ENCODE measurements at regions of chr12 and their contacts with region 1.

Region 1: GRCh38 chr12:77995436-77996167 is 164.9 kb downstream of the NAV3 start:
- DNase-seq: no peak
- ATAC-seq: no peak
- H3K4me3 ChIP-seq: no peak overlapping the region
- H3K27ac ChIP-seq: no peak overlapping the region
- H3K4me1 ChIP-seq: no peaks in the 10 kb centered on the region
- H3K27me3 ChIP-seq: no peaks in the 10 kb centered on the region
- CTCF ChIP-seq: no peak
- EP300 ChIP-seq: no peak
- POLR2A ChIP-seq: no peak
- RAD21 ChIP-seq: no peak

Region 2: DNA sequence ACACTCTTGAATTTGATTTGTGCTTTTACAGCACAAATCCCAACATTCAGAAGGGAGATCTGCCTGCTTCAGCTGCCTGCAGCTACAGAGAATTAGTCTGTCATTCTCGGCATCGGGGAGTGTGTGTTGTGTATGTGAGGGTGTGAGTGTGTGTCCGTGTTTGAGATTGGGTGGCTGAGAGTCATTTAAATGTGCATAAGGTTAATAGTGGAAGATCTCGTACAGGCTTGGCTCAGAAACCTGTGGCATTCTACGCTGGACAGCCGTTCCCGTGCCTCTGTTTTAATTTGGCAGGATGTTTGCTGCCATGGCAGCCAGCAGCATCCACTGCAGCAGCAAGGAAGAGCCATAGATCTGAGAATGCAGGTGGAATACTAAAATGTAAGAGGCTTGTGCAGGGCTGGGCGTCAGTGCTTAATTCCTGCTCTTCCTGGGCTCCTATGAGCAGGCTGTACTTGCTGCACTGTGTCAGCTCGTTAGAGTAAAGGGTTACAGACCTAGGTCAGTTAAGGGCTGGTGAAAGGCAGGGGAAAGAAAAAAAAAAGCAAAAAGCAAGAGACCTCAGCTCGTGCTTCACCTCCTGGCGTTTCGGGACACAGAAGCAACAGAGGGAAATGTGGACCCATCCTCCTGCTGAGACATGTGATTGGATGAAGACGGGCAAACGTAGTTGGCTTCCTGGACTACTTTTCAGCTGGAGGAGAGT is 40.5 kb after region 1 on chr12:
- CTCF ChIA-PET with region 1: no interaction called
- POLR2A ChIA-PET with region 1: no interaction called
- in situ Hi-C with region 1: no loop called
- intact Hi-C with region 1: no loop called
- DNase-seq: no peak
- ATAC-seq: no peak
- H3K4me3 ChIP-seq: no peak overlapping the region
- H3K27ac ChIP-seq: no peak overlapping the region
- H3K4me1 ChIP-seq: no peaks in the 10 kb centered on the region
- H3K27me3 ChIP-seq: no peaks in the 10 kb centered on the region
- CTCF ChIP-seq: no peak
- EP300 ChIP-seq: no peak
- POLR2A ChIP-seq: no peak
- RAD21 ChIP-seq: no peak

Region 3: DNA sequence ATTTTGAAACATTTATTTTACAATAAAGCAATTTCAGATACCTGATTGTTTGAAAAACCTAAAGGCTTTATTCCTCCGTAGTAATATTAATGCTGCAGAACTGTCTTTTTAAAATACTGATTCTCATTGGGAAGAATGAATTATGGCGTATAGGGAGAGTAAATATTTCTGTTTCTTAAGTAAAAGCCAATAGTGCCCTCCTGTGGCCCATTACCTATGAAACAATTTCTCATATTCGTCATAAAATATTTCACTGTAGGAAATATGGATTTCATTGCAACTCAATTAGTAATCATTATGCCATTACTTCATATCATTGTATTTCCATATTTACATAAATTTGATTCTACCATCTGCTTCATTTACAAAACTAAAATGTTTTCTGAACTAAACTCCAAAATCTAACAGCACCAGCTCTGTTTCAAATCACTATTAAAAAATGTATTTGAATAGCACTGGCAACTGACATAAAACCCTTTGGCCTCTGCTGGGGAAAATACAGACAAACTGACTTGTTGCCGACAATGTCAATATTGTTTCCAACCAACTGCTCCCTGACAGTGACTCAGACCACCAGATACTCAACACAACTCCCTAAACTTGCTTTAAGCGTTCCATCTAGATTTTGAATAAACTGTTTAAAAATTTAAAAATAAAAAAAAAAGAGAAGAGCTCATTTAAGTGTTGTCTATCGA is 125.4 kb after region 1 on chr12:
- CTCF ChIA-PET with region 1: interaction called, 5 read pairs
- POLR2A ChIA-PET with region 1: no interaction called
- in situ Hi-C with region 1: no loop called
- intact Hi-C with region 1: loop called (anchors 1 kb)
- DNase-seq: no peak
- ATAC-seq: no peak
- H3K4me3 ChIP-seq: no peak overlapping the region
- H3K27ac ChIP-seq: no peak overlapping the region
- H3K4me1 ChIP-seq: no peaks in the 10 kb centered on the region
- H3K27me3 ChIP-seq: no peaks in the 10 kb centered on the region
- CTCF ChIP-seq: no peak
- EP300 ChIP-seq: no peak
- POLR2A ChIP-seq: no peak
- RAD21 ChIP-seq: no peak

Measured in HepG2 (cell line).